Mucosa of descending colon (tissue), 3 donors: ENCODE measurements at regions of chr15 and their contacts with region 1.

Region 1: GRCh38 chr15:66630801-66631351 is 65.1 kb upstream of the LCTL start:
- DNase-seq: no peak
- ATAC-seq: no peak
- H3K4me3 ChIP-seq: no peak overlapping the region
- H3K4me1 ChIP-seq: no peaks in the 10 kb centered on the region
- CTCF ChIP-seq: no peak

Region 2: GRCh38 chr15:66685638-66686150 is 54.8 kb after region 1 on chr15:
- intact Hi-C with region 1: loop called in 1 of 2 experiments (anchors 10 kb)
- DNase-seq: no peak
- ATAC-seq: no peak
- H3K4me3 ChIP-seq: no peak overlapping the region
- H3K4me1 ChIP-seq: no peaks in the 10 kb centered on the region
- CTCF ChIP-seq: no peak

Region 3: GRCh38 chr15:66923438-66923881 is 292.6 kb after region 1 on chr15:
- intact Hi-C with region 1: no loop called
- DNase-seq: peak in 2 of 3 donors; percentile 50 to 62
- ATAC-seq: peak; percentile 67
- H3K4me3 ChIP-seq: no peak overlapping the region
- H3K4me1 ChIP-seq: no peaks in the 10 kb centered on the region
- CTCF ChIP-seq: peak; percentile 32